Transverse colon (tissue), 4 donors: ENCODE measurements at regions of chr18 and their contacts with region 1.

Region 1: DNA sequence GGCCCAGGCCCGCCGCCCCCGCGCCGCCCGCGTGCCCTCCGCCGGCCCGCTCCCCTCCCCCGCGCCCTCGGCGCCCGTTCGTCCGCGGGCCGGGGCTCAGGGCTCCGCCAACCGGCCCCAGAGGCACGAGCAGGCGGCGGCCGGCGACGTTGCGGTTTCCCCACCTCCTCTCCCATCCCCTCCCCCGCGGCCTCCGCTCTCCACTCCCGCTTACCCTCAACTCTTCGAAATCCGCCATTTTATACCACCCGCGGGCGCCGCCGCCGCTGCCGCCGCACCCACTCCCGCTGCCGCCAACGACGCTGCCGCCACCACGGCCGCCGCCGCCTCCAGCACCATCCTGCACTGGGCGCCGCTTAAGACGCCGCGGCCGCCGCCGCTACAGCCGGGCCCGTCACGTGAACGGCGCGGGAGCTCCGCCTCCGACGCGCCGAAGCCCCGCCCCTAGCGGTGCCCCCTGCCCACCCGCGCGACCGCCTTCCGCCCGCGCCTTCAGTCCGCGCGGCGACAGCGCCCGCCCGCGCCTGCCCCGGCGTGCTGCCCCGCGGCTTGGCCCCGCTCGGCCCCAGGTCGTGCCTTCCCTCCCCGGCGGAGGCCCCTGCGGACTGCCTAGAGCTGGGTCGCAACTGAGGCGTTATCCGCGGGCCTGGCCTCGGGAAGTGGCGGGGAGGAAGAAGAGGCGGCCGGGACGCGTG is at the starts of genes KATNAL2 and PIAS2:
- DNase-seq: peak; percentile 83
- H3K4me3 ChIP-seq: peak within 1 kb of the TSS; percentile 69 to 87 (median 78)
- H3K27ac ChIP-seq: peak within 1 kb of the TSS; percentile 87 to 96 (median 92)
- H3K4me1 ChIP-seq: peaks cover 3 to 25% (median 17%) of the 10 kb centered on the region in 4 donors
- H3K27me3 ChIP-seq: no peaks in the 10 kb centered on the region
- CTCF ChIP-seq: no peak
- EP300 ChIP-seq: no peak
- POLR2A ChIP-seq: peak; percentile 76
- total RNA-seq, gene KATNAL2: 4.4 to 5.2 (median 5.0) TPM
- total RNA-seq, gene PIAS2: 19.5 to 33.8 (median 27.0) TPM

Region 2: GRCh38 chr18:46809145-46809544 is 108.1 kb before region 1 on chr18:
- in situ Hi-C with region 1: no loop called
- intact Hi-C with region 1: no loop called
- DNase-seq: no peak
- H3K4me3 ChIP-seq: no peak overlapping the region
- H3K27ac ChIP-seq: no peak overlapping the region
- H3K4me1 ChIP-seq: no peaks in the 10 kb centered on the region
- H3K27me3 ChIP-seq: no peaks in the 10 kb centered on the region
- CTCF ChIP-seq: no peak
- EP300 ChIP-seq: no peak
- POLR2A ChIP-seq: no peak

Region 3: GRCh38 chr18:46842583-46842982 is 74.7 kb before region 1 on chr18:
- in situ Hi-C with region 1: no loop called
- intact Hi-C with region 1: no loop called
- DNase-seq: no peak
- H3K4me3 ChIP-seq: no peak overlapping the region
- H3K27ac ChIP-seq: no peak overlapping the region
- H3K4me1 ChIP-seq: no peaks in the 10 kb centered on the region
- H3K27me3 ChIP-seq: no peaks in the 10 kb centered on the region
- CTCF ChIP-seq: no peak
- EP300 ChIP-seq: no peak
- POLR2A ChIP-seq: no peak

Region 4: DNA sequence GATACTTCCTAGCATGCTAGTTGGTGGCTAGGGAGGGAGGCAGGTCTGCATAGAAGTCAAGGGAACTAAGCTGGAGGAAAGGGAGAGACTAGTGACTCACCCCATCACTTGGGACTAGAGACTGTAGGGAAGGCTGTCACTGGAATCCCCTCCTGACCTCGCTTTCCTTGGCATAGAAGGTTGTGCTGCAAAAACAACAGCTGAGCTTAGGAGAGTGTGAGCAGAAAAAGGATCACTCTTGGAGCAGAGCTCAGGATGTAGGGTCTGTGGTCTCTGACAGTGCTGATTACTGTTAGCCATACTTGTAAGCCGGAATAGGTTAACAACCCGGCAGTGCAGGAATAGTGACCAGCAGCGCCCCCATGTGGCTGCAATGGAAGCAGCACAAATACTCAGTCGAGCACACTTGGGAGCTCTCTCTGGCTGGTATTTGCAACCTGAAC is 1080.1 kb after region 1 on chr18:
- in situ Hi-C with region 1: no loop called
- intact Hi-C with region 1: loop called (anchors 10 kb)
- DNase-seq: no peak
- H3K4me3 ChIP-seq: no peak overlapping the region
- H3K27ac ChIP-seq: no peak overlapping the region
- H3K4me1 ChIP-seq: no peaks in the 10 kb centered on the region
- H3K27me3 ChIP-seq: no peaks in the 10 kb centered on the region
- CTCF ChIP-seq: peak in 1 of 5 experiments; percentile 22
- EP300 ChIP-seq: no peak
- POLR2A ChIP-seq: no peak